ENCODE measurements at regions of chr10 and their contacts with region 1.

Region 1: GRCh38 chr10:62594093-62594520 is 210.4 kb upstream of the ADO start:
- DNase-seq: peak; percentile 73
- ATAC-seq: peak; percentile 95
- H3K4me3 ChIP-seq: no peak overlapping the region
- H3K27ac ChIP-seq: no peak overlapping the region
- H3K4me1 ChIP-seq: peaks cover 4% of the 10 kb centered on the region
- H3K27me3 ChIP-seq: no peaks in the 10 kb centered on the region
- CTCF ChIP-seq: peak; percentile 87

Region 2: DNA sequence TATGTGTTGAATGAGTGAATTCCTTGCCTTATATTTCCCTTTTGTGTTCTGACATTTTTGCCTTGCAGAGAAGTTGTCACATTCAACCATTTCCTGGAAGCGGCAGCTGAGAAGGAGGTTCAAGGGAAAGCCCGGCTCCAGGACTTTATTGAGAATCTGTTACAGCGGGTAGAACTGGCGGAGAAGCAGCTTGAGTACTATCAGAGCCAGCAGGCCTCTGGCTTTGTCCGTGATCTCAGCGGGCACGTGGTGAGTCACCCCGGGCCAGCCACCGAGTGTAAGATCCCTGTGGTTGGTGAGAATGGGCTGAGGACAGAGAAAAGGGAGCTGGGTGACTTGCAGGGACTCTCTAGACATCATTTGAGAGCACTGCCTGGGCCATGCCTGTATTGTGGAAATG is 205.8 kb before region 1 on chr10:
- intact Hi-C with region 1: no loop called
- DNase-seq: no peak
- ATAC-seq: no peak
- H3K4me3 ChIP-seq: no peak overlapping the region
- H3K27ac ChIP-seq: no peak overlapping the region
- H3K4me1 ChIP-seq: peaks cover 7% of the 10 kb centered on the region
- H3K27me3 ChIP-seq: no peaks in the 10 kb centered on the region
- CTCF ChIP-seq: no peak

Region 3: DNA sequence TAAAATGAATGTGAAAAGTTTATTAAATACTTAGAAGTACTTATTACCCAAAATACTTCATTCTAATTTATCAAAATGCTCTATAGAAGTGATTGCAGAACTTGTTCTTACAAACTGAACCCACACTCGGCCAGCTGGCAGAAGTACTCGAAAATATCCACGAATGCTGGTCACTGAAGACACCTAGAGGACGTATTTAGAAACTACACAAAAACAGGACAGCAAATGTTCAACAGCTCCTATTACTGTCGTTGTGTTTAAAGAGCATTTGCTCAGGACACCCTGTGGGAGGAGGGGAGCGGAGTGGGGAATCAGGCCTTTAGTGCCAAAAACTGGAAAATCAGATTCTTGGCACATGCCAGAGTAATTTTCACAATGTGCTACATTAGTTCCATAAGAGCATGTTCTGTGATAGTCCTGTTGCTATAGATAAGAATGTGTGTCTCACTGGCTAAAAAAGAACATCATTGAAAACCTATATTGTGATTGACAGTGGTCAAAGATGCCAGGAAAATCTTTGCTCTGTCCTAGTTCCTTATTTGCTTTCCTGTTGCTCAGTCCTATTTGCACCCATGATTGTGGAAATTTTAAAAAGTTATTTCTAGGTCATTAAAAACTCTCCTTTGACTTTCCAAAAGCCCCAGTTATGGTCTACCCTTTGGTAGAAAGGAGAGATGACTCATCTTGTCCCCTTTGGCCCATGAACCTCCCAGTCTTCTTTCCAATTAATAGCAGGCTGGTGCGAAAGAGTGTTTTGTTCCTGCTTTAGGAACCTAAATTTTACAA is 490.0 kb after region 1 on chr10:
- intact Hi-C with region 1: loop called (anchors 10 kb)
- DNase-seq: no peak
- ATAC-seq: peak; percentile 96
- H3K4me3 ChIP-seq: no peak overlapping the region
- H3K27ac ChIP-seq: peak overlapping the region; percentile 17
- H3K4me1 ChIP-seq: peaks cover 5% of the 10 kb centered on the region
- H3K27me3 ChIP-seq: no peaks in the 10 kb centered on the region
- CTCF ChIP-seq: peak; percentile 74